ENCODE measurements at regions of chr20 and their contacts with region 1.

Region 1: GRCh38 chr20:37686762-37687477 is 6.9 kb upstream of the CTNNBL1 start:
- DNase-seq: peak; percentile 15
- ATAC-seq: peak; percentile 94
- H3K4me3 Mint-ChIP-seq: no peak overlapping the region
- H3K27ac Mint-ChIP-seq: no peak overlapping the region
- H3K4me1 Mint-ChIP-seq: peaks cover 22% of the 10 kb centered on the region
- H3K27me3 Mint-ChIP-seq: peaks cover 32% of the 10 kb centered on the region

Region 2: GRCh38 chr20:37745553-37745952 is 58.6 kb after region 1 on chr20:
- CTCF ChIA-PET with region 1: no interaction called
- POLR2A ChIA-PET with region 1: no interaction called
- intact Hi-C with region 1: loop called in 1 of 2 experiments (anchors 2 kb)
- DNase-seq: peak; percentile 80
- ATAC-seq: peak; percentile 97
- H3K4me3 Mint-ChIP-seq: peak overlapping the region; percentile 36
- H3K27ac Mint-ChIP-seq: peak overlapping the region; percentile 95
- H3K4me1 Mint-ChIP-seq: peaks cover 34% of the 10 kb centered on the region
- H3K27me3 Mint-ChIP-seq: no peaks in the 10 kb centered on the region

Region 3: GRCh38 chr20:37816003-37816402 is 129.1 kb after region 1 on chr20:
- CTCF ChIA-PET with region 1: no interaction called
- POLR2A ChIA-PET with region 1: interaction called, 10 read pairs
- intact Hi-C with region 1: no loop called
- DNase-seq: no peak
- ATAC-seq: no peak
- H3K4me3 Mint-ChIP-seq: no peak overlapping the region
- H3K27ac Mint-ChIP-seq: no peak overlapping the region
- H3K4me1 Mint-ChIP-seq: no peaks in the 10 kb centered on the region
- H3K27me3 Mint-ChIP-seq: no peaks in the 10 kb centered on the region

Region 4: DNA sequence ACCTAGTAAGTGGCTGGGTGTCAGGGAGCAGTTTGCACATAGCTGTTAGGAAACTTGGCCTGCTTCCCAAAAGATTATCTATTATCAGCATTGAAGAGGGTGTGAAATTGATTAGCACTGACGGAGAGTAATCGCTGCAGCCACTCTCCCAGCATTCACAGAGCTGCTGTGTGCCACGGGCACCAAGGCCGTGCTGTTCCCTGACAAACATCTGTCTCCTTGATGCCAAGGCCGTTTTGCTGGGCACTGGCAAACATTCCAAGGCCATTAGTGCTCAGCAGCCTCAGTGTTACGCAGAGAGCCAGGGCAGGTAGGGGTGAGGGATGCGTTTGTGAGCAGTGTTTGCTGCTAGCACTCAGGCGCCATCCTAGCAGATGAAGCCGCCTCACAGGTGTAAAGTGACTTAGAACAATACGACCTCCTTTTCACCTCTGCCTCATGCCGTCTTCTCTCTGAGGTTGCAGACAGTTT is 158.4 kb after region 1 on chr20:
- CTCF ChIA-PET with region 1: no interaction called
- POLR2A ChIA-PET with region 1: no interaction called
- intact Hi-C with region 1: no loop called
- DNase-seq: no peak
- ATAC-seq: no peak
- H3K4me3 Mint-ChIP-seq: no peak overlapping the region
- H3K27ac Mint-ChIP-seq: no peak overlapping the region
- H3K4me1 Mint-ChIP-seq: no peaks in the 10 kb centered on the region
- H3K27me3 Mint-ChIP-seq: no peaks in the 10 kb centered on the region

Region 5: DNA sequence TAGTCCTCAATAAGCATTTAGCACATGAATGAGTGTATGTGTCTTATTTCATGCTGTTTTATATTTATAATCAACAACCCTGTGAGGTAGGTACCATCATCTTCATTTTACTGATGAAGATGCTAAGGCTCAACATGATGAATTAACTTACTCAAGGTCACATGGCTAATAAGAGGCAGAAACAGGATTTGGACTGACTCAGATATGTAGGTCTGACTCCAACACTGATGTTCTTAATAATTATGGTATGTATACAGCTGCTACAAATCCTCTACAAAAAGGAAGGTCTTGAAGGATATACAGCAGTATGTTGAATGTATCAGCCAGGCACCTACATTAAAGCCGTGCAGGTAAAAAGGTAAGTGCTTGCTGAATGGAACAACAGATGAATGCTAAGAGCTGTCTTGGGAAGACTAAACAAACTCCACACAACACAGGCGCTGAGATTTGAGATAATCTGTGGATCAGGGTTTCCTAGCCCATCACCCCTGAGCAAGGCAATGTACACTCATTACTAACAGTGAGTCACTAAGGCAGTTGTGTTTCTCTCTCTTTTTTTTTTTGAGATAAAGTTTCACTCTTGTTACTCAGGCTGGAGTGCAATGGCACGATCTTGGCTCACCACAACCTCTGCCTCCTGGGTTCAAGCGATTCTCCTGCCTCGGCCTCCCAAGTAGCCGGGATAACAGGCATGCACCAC is 314.4 kb after region 1 on chr20:
- CTCF ChIA-PET with region 1: no interaction called
- POLR2A ChIA-PET with region 1: no interaction called
- intact Hi-C with region 1: loop called in 1 of 2 experiments (anchors 1 kb)
- DNase-seq: peak; percentile 46
- ATAC-seq: peak; percentile 87
- H3K4me3 Mint-ChIP-seq: no peak overlapping the region
- H3K27ac Mint-ChIP-seq: peak overlapping the region; percentile 41
- H3K4me1 Mint-ChIP-seq: peaks cover 43% of the 10 kb centered on the region
- H3K27me3 Mint-ChIP-seq: no peaks in the 10 kb centered on the region